ENCODE measurements at regions of chr3 and their contacts with region 1.

Region 1: GRCh38 chr3:106824856-106825255 is 552.4 kb upstream of the CCDC54 start:
- DNase-seq: no peak
- H3K4me3 ChIP-seq: no peak overlapping the region
- H3K27ac ChIP-seq: no peak overlapping the region
- H3K4me1 ChIP-seq: peaks cover 15% of the 10 kb centered on the region
- H3K27me3 ChIP-seq: no peaks in the 10 kb centered on the region
- CTCF ChIP-seq: peak; percentile 60

Region 2: DNA sequence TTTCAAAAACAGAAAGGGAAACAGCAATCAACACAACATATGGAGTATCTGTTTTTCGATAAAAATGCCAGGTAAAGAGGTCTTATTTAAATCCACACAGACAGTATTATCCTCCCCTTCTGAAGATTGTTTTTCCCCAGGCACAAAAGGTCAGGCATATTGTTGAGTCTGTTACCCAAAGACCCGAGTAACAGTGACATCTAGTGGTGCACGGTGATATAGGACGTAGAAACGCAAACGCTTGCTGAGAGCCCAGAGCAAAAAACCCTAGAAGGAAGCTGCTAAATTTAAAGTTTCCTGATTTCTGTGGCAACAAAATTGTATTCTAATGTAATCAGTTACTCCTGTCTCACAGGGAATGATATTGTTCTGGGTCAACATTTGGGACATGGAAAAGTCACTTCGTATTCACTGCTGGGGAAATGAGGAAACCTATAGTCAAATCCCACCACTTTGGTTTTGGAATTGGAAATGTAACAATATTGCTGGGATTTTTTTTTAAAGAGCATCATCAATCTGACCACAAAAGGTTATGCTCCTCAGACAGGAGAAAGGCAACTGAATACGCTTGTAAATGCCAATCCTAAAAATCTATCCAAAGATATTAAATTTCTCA is 239.7 kb after region 1 on chr3:
- intact Hi-C with region 1: loop called (anchors 10 kb)
- DNase-seq: peak; percentile 18
- H3K4me3 ChIP-seq: no peak overlapping the region
- H3K27ac ChIP-seq: peak overlapping the region; percentile 33
- H3K4me1 ChIP-seq: peaks cover 41% of the 10 kb centered on the region
- H3K27me3 ChIP-seq: no peaks in the 10 kb centered on the region
- CTCF ChIP-seq: peak; percentile 86